ENCODE measurements at regions of chr5 and their contacts with region 1.

Region 1: DNA sequence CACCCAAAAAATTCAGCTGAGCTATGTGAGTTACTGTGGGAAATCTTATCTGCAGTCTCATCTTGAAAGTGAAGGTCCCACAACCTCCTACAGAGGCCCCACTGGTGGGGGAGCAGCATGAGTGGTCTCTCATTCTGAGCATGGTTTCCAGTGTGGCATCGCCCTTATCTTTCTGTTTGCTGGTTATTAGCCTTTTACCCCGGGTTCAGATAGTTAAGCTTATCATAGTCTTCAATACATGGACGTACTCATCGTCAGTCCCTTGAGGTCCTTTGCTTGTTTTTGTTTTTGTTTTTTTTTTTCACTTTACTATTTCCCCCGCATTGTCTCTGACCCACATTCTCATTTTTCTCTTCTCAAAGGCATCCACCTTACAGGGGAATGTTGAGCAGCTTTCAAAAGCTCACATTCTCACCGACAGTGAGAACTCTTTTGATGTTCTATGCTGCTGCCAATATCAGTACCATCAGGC is 7.7 kb upstream of the HAVCR2 start:
- DNase-seq: no peak
- H3K4me3 ChIP-seq: no peak overlapping the region
- H3K27ac ChIP-seq: no peak overlapping the region
- H3K4me1 ChIP-seq: no peaks in the 10 kb centered on the region
- H3K27me3 ChIP-seq: no peaks in the 10 kb centered on the region
- CTCF ChIP-seq: no peak

Region 2: GRCh38 chr5:157004893-157005551 is 111.5 kb before region 1 on chr5:
- CTCF ChIA-PET with region 1: no interaction called
- dilution Hi-C with region 1: no loop called
- in situ Hi-C with region 1: no loop called
- intact Hi-C with region 1: no loop called
- DNase-seq: no peak
- H3K4me3 ChIP-seq: no peak overlapping the region
- H3K27ac ChIP-seq: no peak overlapping the region
- H3K4me1 ChIP-seq: no peaks in the 10 kb centered on the region
- H3K27me3 ChIP-seq: no peaks in the 10 kb centered on the region
- CTCF ChIP-seq: no peak

Region 3: GRCh38 chr5:157026789-157027424 is 89.6 kb before region 1 on chr5:
- CTCF ChIA-PET with region 1: no interaction called
- dilution Hi-C with region 1: loop called (anchors 5 kb)
- in situ Hi-C with region 1: no loop called
- intact Hi-C with region 1: no loop called
- DNase-seq: peak; percentile 5
- H3K4me3 ChIP-seq: no peak overlapping the region
- H3K27ac ChIP-seq: no peak overlapping the region
- H3K4me1 ChIP-seq: no peaks in the 10 kb centered on the region
- H3K27me3 ChIP-seq: no peaks in the 10 kb centered on the region
- CTCF ChIP-seq: peak; percentile 10 to 40

Region 4: GRCh38 chr5:157486221-157486681 is 369.7 kb after region 1 on chr5:
- CTCF ChIA-PET with region 1: no interaction called
- dilution Hi-C with region 1: no loop called
- in situ Hi-C with region 1: no loop called
- intact Hi-C with region 1: no loop called
- DNase-seq: no peak
- H3K4me3 ChIP-seq: no peak overlapping the region
- H3K27ac ChIP-seq: no peak overlapping the region
- H3K4me1 ChIP-seq: no peaks in the 10 kb centered on the region
- H3K27me3 ChIP-seq: no peaks in the 10 kb centered on the region
- CTCF ChIP-seq: no peak

Measured in mammary epithelial cell (primary cell).